Mammary epithelial cell (primary cell): ENCODE measurements at regions of chr6 and their contacts with region 1.

Region 1: DNA sequence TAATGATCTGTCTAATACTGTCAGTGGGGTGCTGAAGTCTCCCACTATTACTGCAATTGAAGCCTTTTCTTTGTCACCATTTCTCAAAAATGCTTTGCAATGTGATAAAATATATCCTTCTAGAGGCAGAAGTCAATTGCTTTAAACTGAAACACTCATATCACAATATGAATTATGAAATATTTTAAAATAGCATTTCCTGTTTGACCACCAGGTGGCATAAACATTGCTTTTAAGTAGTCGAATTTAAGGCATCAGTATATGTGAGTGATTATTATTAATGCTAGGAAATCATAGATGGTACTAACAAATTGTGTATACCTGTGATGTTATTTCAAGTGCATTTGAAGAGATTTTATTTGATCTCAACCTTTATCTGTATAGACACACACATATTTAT is 87.5 kb downstream of the MEI4 start:
- DNase-seq: peak; percentile 5
- H3K4me3 ChIP-seq: no peak overlapping the region
- H3K27ac ChIP-seq: no peak overlapping the region
- H3K4me1 ChIP-seq: no peaks in the 10 kb centered on the region
- H3K27me3 ChIP-seq: no peaks in the 10 kb centered on the region
- CTCF ChIP-seq: peak; percentile 52 to 55

Region 2: GRCh38 chr6:78810146-78810545 is 1069.8 kb after region 1 on chr6:
- CTCF ChIA-PET with region 1: no interaction called
- dilution Hi-C with region 1: no loop called
- in situ Hi-C with region 1: loop called in 1 of 2 experiments (anchors 25 kb)
- intact Hi-C with region 1: loop called (anchors 1 kb)
- DNase-seq: peak; percentile 77
- H3K4me3 ChIP-seq: no peak overlapping the region
- H3K27ac ChIP-seq: peak overlapping the region; percentile 85
- H3K4me1 ChIP-seq: peaks cover 23% of the 10 kb centered on the region
- H3K27me3 ChIP-seq: no peaks in the 10 kb centered on the region
- CTCF ChIP-seq: peak; percentile 76 to 80

Region 3: GRCh38 chr6:79713701-79714322 is 1973.4 kb after region 1 on chr6:
- CTCF ChIA-PET with region 1: no interaction called
- dilution Hi-C with region 1: no loop called
- in situ Hi-C with region 1: no loop called
- intact Hi-C with region 1: loop called (anchors 10 kb)
- DNase-seq: peak; percentile 1
- H3K4me3 ChIP-seq: no peak overlapping the region
- H3K27ac ChIP-seq: no peak overlapping the region
- H3K4me1 ChIP-seq: no peaks in the 10 kb centered on the region
- H3K27me3 ChIP-seq: no peaks in the 10 kb centered on the region
- CTCF ChIP-seq: peak; percentile 32 to 57